Gastrocnemius medialis (tissue), 4 donors: ENCODE measurements at regions of chr6 and their contacts with region 1.

Region 1: GRCh38 chr6:14876778-14877613 is 368.9 kb upstream of the JARID2 start:
- DNase-seq: peak in 1 of 2 donors; percentile 48
- ATAC-seq: peak; percentile 91 to 93
- H3K4me3 ChIP-seq: peak overlapping the region in 2 of 4 donors; percentile 14 to 26
- H3K27ac ChIP-seq: peak overlapping the region; percentile 75 to 88 (median 76)
- H3K4me1 ChIP-seq: peaks cover 24 to 46% of the 10 kb centered on the region in 2 donors
- H3K27me3 ChIP-seq: no peaks in the 10 kb centered on the region
- CTCF ChIP-seq: no peak
- POLR2A ChIP-seq: peak in 1 of 2 donors; percentile 44

Region 2: DNA sequence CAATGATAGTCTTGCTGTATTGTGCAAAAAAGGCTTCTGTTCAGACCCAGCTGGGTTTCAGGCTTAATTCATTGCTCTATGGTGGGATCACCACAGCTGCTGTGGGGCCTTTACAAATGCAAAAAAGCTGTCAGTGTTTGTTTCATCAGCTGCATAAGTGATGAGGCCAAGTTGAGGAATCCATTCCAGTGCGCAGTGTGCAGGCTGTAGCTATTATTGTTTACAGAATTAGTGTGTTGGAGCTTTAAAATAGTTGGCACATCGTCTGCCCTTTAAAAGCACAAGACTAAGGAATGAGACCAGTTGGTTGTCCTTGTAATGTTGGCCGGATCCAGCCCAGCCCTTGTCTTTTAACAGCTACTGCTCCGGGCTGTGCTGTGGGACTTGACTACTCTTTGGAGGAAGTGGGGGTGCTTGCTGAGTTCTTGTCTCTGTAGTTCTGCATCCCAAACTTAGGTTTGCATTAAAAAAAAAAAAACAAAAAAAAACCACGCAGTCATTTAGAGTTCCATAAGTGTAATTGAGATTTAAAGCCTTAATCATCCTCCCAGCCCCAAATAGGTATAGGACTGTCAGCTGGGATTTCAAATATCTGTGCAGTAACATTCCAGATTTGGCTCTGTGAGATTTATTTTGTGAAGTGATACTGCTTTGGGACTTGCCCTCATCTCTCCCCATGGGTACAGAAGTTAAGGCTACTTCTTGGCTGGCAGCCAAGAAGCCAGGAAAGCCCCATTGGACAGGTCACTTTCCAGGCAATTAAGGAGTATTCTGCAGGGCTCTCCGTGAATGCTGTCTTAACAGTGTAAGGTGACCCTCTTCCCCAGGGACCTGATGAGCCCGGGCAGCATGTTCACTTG is 388.1 kb after region 1 on chr6:
- in situ Hi-C with region 1: no loop called
- intact Hi-C with region 1: loop called (anchors 5 kb)
- DNase-seq: peak; percentile 58 to 63
- ATAC-seq: peak; percentile 48 to 51
- H3K4me3 ChIP-seq: peak overlapping the region in 3 of 4 donors; percentile 0 to 39 (median 10)
- H3K27ac ChIP-seq: peak overlapping the region; percentile 82 to 88 (median 84)
- H3K4me1 ChIP-seq: peaks cover 78 to 87% of the 10 kb centered on the region in 2 donors
- H3K27me3 ChIP-seq: no peaks in the 10 kb centered on the region
- CTCF ChIP-seq: no peak
- POLR2A ChIP-seq: no peak

Region 3: DNA sequence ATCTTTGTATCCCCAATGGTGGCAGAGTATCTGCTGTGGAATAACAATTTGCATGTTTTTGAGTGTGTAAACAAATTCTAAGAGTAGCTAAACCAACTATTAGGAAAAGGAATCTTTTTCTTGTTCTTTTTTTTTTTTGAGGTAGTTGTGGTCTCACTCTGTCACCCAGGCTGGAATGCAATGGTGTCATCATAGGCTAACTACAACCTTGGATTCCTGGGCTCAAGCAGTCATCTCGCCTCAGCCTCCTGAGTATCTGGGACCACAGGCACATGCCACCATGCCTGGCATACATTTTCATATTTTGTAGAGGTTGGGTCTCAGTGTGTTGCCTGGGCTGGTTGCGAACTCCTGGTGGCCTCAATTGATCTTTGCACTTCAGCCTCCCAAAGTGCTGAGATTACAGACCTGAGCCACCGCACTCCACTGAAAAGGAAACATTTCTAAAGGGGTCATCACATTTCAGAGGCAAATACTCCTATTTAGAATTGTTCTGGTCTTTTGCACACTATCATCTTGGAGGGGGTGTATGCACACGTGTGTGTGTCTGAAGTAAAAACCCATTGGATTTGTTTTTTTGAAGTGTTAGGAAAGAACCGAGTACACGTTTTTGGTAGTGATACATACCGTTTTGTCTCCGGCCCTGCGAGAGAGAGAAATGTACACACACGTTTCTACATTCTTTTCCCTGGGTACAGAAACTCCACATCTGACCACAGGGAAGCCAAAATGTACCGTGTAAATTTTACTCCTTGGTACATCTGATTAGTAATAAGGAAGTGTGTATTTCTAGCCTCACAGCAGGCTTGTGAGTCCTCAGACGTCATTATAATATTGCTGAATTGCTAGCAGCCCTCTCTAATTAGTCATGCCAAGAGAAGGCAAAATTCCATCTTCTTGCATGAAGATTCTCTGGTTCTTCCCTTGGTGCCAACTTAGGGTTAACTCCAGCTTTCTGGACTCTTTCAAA is 552.4 kb after region 1 on chr6:
- in situ Hi-C with region 1: no loop called
- intact Hi-C with region 1: loop called (anchors 10 kb)
- DNase-seq: no peak
- ATAC-seq: peak in 1 of 2 donors; percentile 11
- H3K4me3 ChIP-seq: no peak overlapping the region
- H3K27ac ChIP-seq: peak overlapping the region; percentile 83 to 90 (median 90)
- H3K4me1 ChIP-seq: peaks cover 69 to 77% of the 10 kb centered on the region in 2 donors
- H3K27me3 ChIP-seq: no peaks in the 10 kb centered on the region
- CTCF ChIP-seq: no peak
- POLR2A ChIP-seq: no peak

Region 4: GRCh38 chr6:15491255-15491985 is 614.4 kb after region 1 on chr6:
- in situ Hi-C with region 1: loop called in 2 of 4 experiments (anchors 25 kb)
- intact Hi-C with region 1: no loop called
- DNase-seq: peak; percentile 59 to 77
- ATAC-seq: peak; percentile 42 to 56
- H3K4me3 ChIP-seq: no peak overlapping the region
- H3K27ac ChIP-seq: peak overlapping the region; percentile 55 to 73 (median 69)
- H3K4me1 ChIP-seq: peaks cover 38 to 45% of the 10 kb centered on the region in 2 donors
- H3K27me3 ChIP-seq: no peaks in the 10 kb centered on the region
- CTCF ChIP-seq: peak; percentile 86 to 94 (median 93)
- POLR2A ChIP-seq: no peak